Endothelial cell of umbilical vein (primary cell): ENCODE measurements at regions of chr10 and their contacts with region 1.

Region 1: GRCh38 chr10:29998142-29998808 is 61.1 kb downstream of the JCAD start:
- DNase-seq: peak; percentile 84
- H3K4me3 ChIP-seq: no peak overlapping the region
- H3K27ac ChIP-seq: no peak overlapping the region
- H3K4me1 ChIP-seq: peaks cover 6% of the 10 kb centered on the region
- H3K27me3 ChIP-seq: no peaks in the 10 kb centered on the region
- CTCF ChIP-seq: peak; percentile 98
- POLR2A ChIP-seq: no peak

Region 2: DNA sequence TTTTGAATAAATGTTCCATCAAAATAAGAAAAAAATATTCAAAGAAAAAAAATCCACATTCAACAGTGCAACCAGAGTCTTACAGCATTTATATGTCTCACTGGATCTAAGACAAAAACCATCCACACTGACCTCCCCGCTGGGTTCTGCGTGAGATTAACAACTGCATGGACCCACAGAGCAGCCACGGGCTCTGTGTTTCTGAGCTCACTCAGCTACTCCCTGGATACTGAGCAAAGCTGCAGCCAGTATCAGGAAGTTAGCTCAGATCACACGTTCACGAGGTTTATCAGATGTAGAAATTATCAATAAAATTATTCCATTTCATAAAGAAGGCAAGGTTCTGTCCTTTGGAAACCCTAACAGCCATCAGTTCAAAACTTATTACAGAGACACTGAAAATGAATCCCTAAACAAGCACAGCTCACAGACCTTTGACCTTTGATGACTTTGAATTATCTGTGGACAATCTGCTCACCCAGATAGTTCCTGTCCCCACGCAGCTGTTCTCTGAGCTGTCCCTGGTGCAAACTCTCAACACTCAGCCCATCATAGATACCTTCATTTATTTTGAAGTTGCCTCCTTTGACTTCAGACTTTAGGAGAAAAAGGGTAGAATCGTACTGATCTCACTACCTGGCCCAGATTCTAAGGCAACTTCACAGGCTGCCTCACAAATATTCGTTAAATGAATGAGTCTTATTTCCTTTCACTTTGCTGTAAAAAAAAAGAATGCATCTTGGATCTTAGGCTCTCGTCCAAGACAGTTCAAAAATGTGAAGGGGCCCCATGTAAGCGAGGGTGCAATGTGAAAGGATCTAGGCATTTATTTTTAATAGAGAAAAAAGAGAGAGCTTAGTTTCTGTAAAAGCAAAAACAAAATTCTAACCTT is 295.8 kb before region 1 on chr10:
- CTCF ChIA-PET with region 1: no interaction called
- POLR2A ChIA-PET with region 1: no interaction called
- dilution Hi-C with region 1: no loop called
- intact Hi-C with region 1: no loop called
- DNase-seq: no peak
- H3K4me3 ChIP-seq: no peak overlapping the region
- H3K27ac ChIP-seq: no peak overlapping the region
- H3K4me1 ChIP-seq: peaks cover 4% of the 10 kb centered on the region
- H3K27me3 ChIP-seq: no peaks in the 10 kb centered on the region
- CTCF ChIP-seq: no peak
- POLR2A ChIP-seq: no peak

Region 3: GRCh38 chr10:29746080-29746797 is 252.0 kb before region 1 on chr10:
- CTCF ChIA-PET with region 1: interaction called, 10 read pairs
- POLR2A ChIA-PET with region 1: no interaction called
- dilution Hi-C with region 1: no loop called
- intact Hi-C with region 1: no loop called
- DNase-seq: peak; percentile 90
- H3K4me3 ChIP-seq: no peak overlapping the region
- H3K27ac ChIP-seq: peak overlapping the region; percentile 68
- H3K4me1 ChIP-seq: peaks cover 16% of the 10 kb centered on the region
- H3K27me3 ChIP-seq: no peaks in the 10 kb centered on the region
- CTCF ChIP-seq: no peak
- POLR2A ChIP-seq: no peak

Region 4: DNA sequence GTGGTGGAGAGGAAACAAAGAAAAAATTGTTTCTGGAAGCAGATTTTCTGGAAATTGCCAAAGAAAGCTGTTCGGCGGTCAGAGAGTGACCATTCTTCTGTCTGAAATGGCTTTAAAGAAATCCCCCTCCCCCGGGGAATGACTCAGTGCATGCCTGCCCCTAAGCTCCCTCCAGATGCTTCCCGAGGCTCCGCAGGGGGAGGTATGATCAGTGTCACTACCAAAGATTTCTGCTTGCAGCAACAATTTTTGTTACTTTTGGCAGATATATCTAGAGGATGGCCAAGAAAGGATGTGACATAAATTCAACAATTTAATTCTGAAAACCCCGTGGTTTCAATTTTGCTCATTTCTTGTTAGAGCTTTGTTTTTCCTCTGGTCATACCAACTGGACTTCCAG is 102.8 kb before region 1 on chr10:
- CTCF ChIA-PET with region 1: interaction called, 12 read pairs
- POLR2A ChIA-PET with region 1: no interaction called
- dilution Hi-C with region 1: no loop called
- intact Hi-C with region 1: no loop called
- DNase-seq: peak; percentile 98
- H3K4me3 ChIP-seq: peak overlapping the region in 1 of 3 experiments; percentile 19
- H3K27ac ChIP-seq: peak overlapping the region; percentile 83
- H3K4me1 ChIP-seq: peaks cover 14% of the 10 kb centered on the region
- H3K27me3 ChIP-seq: no peaks in the 10 kb centered on the region
- CTCF ChIP-seq: no peak
- POLR2A ChIP-seq: peak; percentile 35

Region 5: DNA sequence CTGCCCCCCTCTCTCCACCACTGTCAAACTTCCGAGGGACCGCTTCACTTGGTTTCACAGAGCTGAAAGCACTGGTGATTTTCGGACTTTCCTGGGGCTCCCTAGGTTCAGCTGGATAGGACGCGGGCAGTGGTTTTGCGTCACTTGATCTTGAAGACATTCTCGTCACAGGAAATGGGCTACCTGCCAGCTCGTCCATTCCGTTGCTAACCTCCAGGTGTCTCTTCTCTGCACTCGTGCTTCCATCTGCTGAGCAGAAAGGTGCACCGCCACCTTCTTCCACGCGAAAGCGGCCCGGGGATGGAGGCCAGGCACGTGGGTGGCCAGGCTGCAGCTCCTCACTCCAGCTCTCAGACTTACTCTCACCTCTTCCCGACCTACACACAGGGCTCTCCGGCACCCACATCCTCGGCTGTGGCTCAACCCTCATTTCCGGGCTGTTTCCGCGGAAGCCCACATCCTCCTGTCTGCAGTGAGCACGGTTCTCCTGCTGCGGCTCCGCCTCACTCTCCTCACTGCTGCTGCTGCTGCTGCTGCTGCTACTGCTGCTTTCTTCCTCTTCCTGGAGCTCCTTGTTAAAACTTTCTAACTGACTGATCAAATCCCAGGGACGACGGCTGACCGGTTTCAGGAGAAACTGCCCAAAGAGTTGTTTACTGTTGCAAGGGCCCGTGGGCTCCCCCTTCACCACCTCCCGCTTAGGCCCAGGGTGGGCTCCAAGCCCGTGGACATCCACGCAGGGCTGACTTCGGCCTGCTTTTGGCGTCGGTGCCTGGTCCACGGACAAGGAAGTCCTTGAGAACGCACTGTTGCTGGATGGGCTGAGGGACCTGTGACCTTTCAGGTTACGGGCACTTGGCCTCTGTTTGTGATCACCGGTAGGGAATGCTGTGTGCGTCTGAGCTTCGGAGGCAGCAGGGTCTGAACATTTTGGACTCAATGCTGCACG is 29.1 kb after region 1 on chr10:
- CTCF ChIA-PET with region 1: interaction called, 17 read pairs
- POLR2A ChIA-PET with region 1: interaction called, 6 read pairs
- dilution Hi-C with region 1: no loop called
- intact Hi-C with region 1: no loop called
- DNase-seq: peak; percentile 73
- H3K4me3 ChIP-seq: no peak overlapping the region
- H3K27ac ChIP-seq: peak overlapping the region; percentile 78
- H3K4me1 ChIP-seq: peaks cover 44% of the 10 kb centered on the region
- H3K27me3 ChIP-seq: no peaks in the 10 kb centered on the region
- CTCF ChIP-seq: peak; percentile 14
- POLR2A ChIP-seq: peak; percentile 40

Region 6: GRCh38 chr10:30059209-30060107 is 61.2 kb after region 1 on chr10 and contains the start of gene JCAD:
- CTCF ChIA-PET with region 1: no interaction called
- POLR2A ChIA-PET with region 1: no interaction called
- dilution Hi-C with region 1: no loop called
- intact Hi-C with region 1: loop called (anchors 2 kb)
- DNase-seq: peak; percentile 69
- H3K4me3 ChIP-seq: peak within 1 kb of the TSS; percentile 62 to 69 (median 68)
- H3K27ac ChIP-seq: peak within 1 kb of the TSS; percentile 69
- H3K4me1 ChIP-seq: peaks cover 59% of the 10 kb centered on the region
- H3K27me3 ChIP-seq: no peaks in the 10 kb centered on the region
- CTCF ChIP-seq: no peak
- POLR2A ChIP-seq: peak; percentile 55
- total RNA-seq, gene JCAD: 76.3 and 79.7 TPM in 2 replicates

Region 7: GRCh38 chr10:30241422-30242110 is 243.3 kb after region 1 on chr10:
- CTCF ChIA-PET with region 1: interaction called, 31 read pairs
- POLR2A ChIA-PET with region 1: no interaction called
- dilution Hi-C with region 1: no loop called
- intact Hi-C with region 1: loop called (anchors 1 kb)
- DNase-seq: no peak
- H3K4me3 ChIP-seq: no peak overlapping the region
- H3K27ac ChIP-seq: no peak overlapping the region
- H3K4me1 ChIP-seq: peaks cover 2% of the 10 kb centered on the region
- H3K27me3 ChIP-seq: no peaks in the 10 kb centered on the region
- CTCF ChIP-seq: no peak
- POLR2A ChIP-seq: no peak

Region 8: DNA sequence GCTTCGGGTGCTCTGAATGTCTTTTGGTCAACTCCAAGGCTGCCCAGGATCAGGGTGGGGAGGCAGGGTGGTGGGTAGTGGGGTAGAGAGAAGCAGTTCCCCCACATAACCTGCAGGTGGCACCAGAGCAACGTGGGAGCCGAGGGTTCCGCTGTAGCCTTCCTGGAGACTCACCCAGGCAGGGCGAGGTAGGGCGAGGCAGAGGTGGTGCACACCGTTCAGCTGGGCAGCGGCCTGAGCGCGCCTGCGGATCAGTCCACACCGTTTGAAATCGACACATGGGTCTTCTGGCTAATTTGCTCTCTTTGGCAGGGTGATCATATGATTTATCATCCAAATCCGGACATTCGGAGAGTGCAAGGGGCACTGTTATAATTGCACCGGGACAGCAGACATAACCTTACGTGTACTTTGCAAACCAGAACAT is 394.3 kb after region 1 on chr10:
- CTCF ChIA-PET with region 1: interaction called, 4 read pairs
- POLR2A ChIA-PET with region 1: no interaction called
- dilution Hi-C with region 1: no loop called
- intact Hi-C with region 1: loop called (anchors 1 kb)
- DNase-seq: peak; percentile 61
- H3K4me3 ChIP-seq: no peak overlapping the region
- H3K27ac ChIP-seq: no peak overlapping the region
- H3K4me1 ChIP-seq: no peaks in the 10 kb centered on the region
- H3K27me3 ChIP-seq: peaks cover 12 to 20% of the 10 kb centered on the region in 2 experiments
- CTCF ChIP-seq: peak; percentile 76 to 95
- POLR2A ChIP-seq: no peak